PC-3 (cell line): ENCODE measurements at regions of chr10 and their contacts with region 1.

Region 1: DNA sequence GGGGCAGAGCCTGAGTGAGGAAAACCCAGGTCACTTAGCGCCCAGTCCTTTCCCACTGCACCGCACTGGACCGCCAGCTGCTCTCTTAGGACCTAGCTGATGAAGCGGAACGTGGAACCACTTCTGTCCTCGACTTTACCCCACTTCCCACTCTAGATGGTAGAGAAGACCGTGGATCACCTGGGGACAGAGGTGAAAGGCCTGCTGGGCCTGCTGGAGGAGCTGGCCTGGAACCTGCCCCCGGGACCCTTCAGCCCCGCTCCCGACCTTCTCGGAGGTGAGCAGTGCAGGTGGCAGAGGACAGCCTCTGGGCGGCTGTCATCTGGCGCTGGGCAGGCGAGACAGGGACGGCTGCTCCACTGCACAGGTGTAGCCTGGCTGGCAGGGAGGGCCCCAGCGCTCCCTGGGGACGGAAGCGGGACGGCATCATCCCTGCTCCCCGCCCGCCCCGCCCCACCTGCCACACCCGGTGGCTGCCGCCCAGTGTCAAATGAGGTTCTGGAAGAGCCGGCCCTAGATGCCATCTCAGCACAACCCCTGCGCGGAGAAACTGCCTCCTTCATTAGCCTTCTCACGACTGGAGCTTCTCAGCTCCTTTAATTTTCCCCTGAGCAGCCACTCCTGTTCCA is 11.7 kb downstream of the PLAC9 start:
- DNase-seq: peak; percentile 97
- ATAC-seq: peak; percentile 77
- H3K4me3 ChIP-seq: peak overlapping the region; percentile 64
- H3K27ac ChIP-seq: peak overlapping the region; percentile 17
- H3K4me1 ChIP-seq: peaks cover 24% of the 10 kb centered on the region
- H3K27me3 ChIP-seq: no peaks in the 10 kb centered on the region; the same call in 1 of the 2 replicates
- CTCF ChIP-seq: peak; percentile 4; the same call in 1 of the 2 replicates

Region 2: GRCh38 chr10:80064120-80064886 is 79.9 kb before region 1 on chr10:
- CTCF ChIA-PET with region 1: interaction called, 8 read pairs
- POLR2A ChIA-PET with region 1: no interaction called
- intact Hi-C with region 1: loop called (anchors 1 kb)
- DNase-seq: no peak
- ATAC-seq: no peak
- H3K4me3 ChIP-seq: no peak overlapping the region
- H3K27ac ChIP-seq: no peak overlapping the region
- H3K4me1 ChIP-seq: no peaks in the 10 kb centered on the region
- H3K27me3 ChIP-seq: no peaks in the 10 kb centered on the region
- CTCF ChIP-seq: no peak

Region 3: GRCh38 chr10:80158598-80159127 is 14.5 kb after region 1 on chr10:
- CTCF ChIA-PET with region 1: interaction called, 12 read pairs
- POLR2A ChIA-PET with region 1: interaction called, 8 read pairs
- intact Hi-C with region 1: loop called (anchors 1 kb)
- DNase-seq: peak; percentile 100
- ATAC-seq: peak; percentile 70
- H3K4me3 ChIP-seq: peak overlapping the region; percentile 2; the same call in 1 of the 2 replicates
- H3K27ac ChIP-seq: peak overlapping the region; percentile 65
- H3K4me1 ChIP-seq: peaks cover 64% of the 10 kb centered on the region
- H3K27me3 ChIP-seq: no peaks in the 10 kb centered on the region
- CTCF ChIP-seq: no peak

Region 4: DNA sequence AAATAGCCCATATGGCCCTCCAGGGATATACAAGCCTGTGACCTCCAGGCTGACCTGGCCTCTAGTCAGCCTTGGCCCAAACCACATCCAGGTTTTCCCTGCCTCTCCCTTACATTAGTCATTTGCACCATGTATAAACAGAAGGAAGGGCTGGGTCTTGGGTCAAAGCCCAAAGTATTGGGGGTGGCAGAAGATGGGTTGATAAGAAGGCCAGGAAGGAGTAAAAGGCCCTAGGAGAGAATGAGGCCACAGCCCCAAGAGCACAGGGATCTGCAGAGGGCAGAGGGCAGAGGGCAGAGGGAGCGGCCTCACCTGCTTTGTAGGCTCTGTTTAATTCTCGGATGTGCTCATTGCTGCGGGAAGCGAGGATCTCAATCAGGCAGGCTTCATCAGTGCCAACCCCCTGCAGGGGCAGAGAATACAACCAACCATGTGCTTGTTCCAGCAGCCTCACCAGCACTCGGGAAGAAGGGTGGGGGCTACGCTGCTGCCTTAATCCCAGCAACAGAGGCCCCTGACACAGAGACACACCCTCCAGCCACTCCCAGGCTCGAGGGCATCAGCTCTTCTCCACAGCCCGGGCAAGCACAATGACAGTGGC is 19.7 kb after region 1 on chr10:
- CTCF ChIA-PET with region 1: interaction called, 12 read pairs
- POLR2A ChIA-PET with region 1: interaction called, 4 read pairs
- intact Hi-C with region 1: loop called (anchors 1 kb)
- DNase-seq: peak; percentile 100
- ATAC-seq: peak; percentile 71
- H3K4me3 ChIP-seq: peak overlapping the region; percentile 23
- H3K27ac ChIP-seq: peak overlapping the region; percentile 78
- H3K4me1 ChIP-seq: peaks cover 55% of the 10 kb centered on the region
- H3K27me3 ChIP-seq: no peaks in the 10 kb centered on the region
- CTCF ChIP-seq: no peak

Region 5: GRCh38 chr10:80196270-80196949 is 52.2 kb after region 1 on chr10:
- CTCF ChIA-PET with region 1: interaction called, 3 read pairs
- POLR2A ChIA-PET with region 1: no interaction called
- intact Hi-C with region 1: loop called (anchors 1 kb)
- DNase-seq: peak; percentile 100
- ATAC-seq: peak; percentile 97
- H3K4me3 ChIP-seq: peak overlapping the region; percentile 21
- H3K27ac ChIP-seq: peak overlapping the region; percentile 74
- H3K4me1 ChIP-seq: peaks cover 69% of the 10 kb centered on the region
- H3K27me3 ChIP-seq: no peaks in the 10 kb centered on the region
- CTCF ChIP-seq: no peak

Region 6: GRCh38 chr10:80205478-80206276 is 61.5 kb after region 1 on chr10 and contains the start of gene ANXA11:
- CTCF ChIA-PET with region 1: interaction called, 18 read pairs
- POLR2A ChIA-PET with region 1: interaction called, 8 read pairs
- intact Hi-C with region 1: loop called (anchors 1 kb)
- DNase-seq: peak; percentile 100
- ATAC-seq: peak; percentile 52
- H3K4me3 ChIP-seq: peak within 1 kb of the TSS; percentile 69
- H3K27ac ChIP-seq: peak within 1 kb of the TSS; percentile 80
- H3K4me1 ChIP-seq: peaks cover 80% of the 10 kb centered on the region
- H3K27me3 ChIP-seq: no peaks in the 10 kb centered on the region
- CTCF ChIP-seq: peak; percentile 1; the same call in 1 of the 2 replicates
- total RNA-seq, gene ANXA11: 434 and 520 TPM in 2 replicates

Region 7: DNA sequence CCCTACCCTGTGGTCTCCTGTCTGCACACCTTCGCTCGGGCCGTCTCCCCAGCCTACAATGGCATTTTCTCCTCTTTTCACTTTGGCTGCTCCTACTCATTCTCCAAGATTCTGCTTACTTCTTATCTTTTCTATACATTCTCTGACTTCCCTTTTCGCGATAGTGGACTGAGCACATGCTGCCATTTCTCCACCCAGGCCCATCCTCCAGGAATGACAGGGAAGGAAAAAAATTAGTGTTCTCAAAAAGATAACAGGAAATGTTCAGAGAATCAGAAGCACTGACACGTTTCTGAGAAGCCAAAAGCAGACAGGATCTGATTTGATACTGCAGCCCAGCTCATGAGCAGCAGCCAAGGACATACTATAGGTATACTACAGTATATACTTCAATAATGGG is 67.6 kb after region 1 on chr10:
- CTCF ChIA-PET with region 1: interaction called, 18 read pairs
- POLR2A ChIA-PET with region 1: interaction called, 8 read pairs
- intact Hi-C with region 1: loop called (anchors 1 kb)
- DNase-seq: peak; percentile 2
- ATAC-seq: no peak
- H3K4me3 ChIP-seq: no peak overlapping the region
- H3K27ac ChIP-seq: no peak overlapping the region
- H3K4me1 ChIP-seq: peaks cover 48% of the 10 kb centered on the region
- H3K27me3 ChIP-seq: no peaks in the 10 kb centered on the region
- CTCF ChIP-seq: no peak